Gastrocnemius medialis (tissue), 4 donors: ENCODE measurements at regions of chr9 and their contacts with region 1.

Region 1: GRCh38 chr9:111631071-111631971 is at the start of gene DNAJC25:
- DNase-seq: peak; percentile 95 to 97
- ATAC-seq: peak; percentile 98 to 99
- H3K4me3 ChIP-seq: peak within 1 kb of the TSS; percentile 78 to 90 (median 90)
- H3K27ac ChIP-seq: peak within 1 kb of the TSS; percentile 92 to 94 (median 93)
- H3K4me1 ChIP-seq: peaks cover 30 to 41% of the 10 kb centered on the region in 2 donors
- H3K27me3 ChIP-seq: no peaks in the 10 kb centered on the region
- CTCF ChIP-seq: peak in 2 of 5 experiments; percentile 22 to 23
- POLR2A ChIP-seq: peak; percentile 100
- total RNA-seq, gene DNAJC25: 3.7 to 7.4 (median 4.9) TPM

Region 2: GRCh38 chr9:110370316-110370715 is 1261.0 kb before region 1 on chr9:
- in situ Hi-C with region 1: no loop called
- intact Hi-C with region 1: no loop called
- DNase-seq: no peak
- ATAC-seq: no peak
- H3K4me3 ChIP-seq: no peak overlapping the region
- H3K27ac ChIP-seq: no peak overlapping the region
- H3K4me1 ChIP-seq: no peaks in the 10 kb centered on the region
- H3K27me3 ChIP-seq: no peaks in the 10 kb centered on the region
- CTCF ChIP-seq: no peak
- POLR2A ChIP-seq: no peak

Region 3: DNA sequence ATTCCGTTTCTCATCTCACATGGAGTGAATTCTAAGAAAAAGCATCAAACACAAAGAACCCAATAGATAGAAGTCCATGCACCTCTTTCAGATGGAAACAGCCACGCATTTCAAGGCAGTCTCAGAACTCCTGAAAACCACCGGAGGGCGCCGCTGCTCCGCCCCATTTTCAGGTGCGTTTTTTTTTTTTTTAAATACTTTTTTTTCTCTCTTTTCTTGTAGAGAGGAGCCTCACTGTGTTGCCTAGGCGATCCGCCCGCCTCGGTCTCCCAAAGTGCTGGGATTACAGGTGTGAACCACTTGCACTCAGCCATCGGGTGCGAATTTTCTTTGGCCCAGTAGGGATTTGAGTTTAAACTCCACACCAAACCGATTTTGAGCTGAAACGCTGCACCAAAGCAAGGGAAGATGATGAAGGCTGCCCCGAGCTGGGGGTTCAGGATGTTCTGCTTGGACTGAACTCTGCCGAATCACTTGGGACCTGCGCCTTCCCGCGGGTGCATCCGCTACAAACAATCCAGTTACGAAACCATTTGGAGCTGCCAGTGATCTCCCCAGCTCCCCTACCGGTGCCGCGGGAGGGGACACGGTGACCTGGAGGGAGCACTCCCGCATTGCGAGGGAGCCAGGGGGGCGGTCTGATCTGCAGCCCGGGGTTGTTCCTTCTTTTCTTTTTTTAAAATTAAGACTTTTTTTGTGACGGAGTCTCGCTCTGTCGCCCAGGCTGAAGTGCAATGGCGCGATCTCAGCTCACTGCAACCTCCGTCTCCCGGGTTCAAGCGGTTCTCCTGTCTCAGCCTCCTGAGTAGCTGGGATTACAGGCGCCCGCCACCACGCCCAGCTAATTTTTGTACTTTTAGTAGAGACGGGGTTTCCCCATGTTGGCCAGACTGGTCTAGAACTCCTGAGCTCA is 33.2 kb before region 1 on chr9:
- in situ Hi-C with region 1: no loop called
- intact Hi-C with region 1: loop called (anchors 5 kb)
- DNase-seq: peak; percentile 35 to 54
- ATAC-seq: peak; percentile 61 to 62
- H3K4me3 ChIP-seq: peak overlapping the region; percentile 66 to 89 (median 80)
- H3K27ac ChIP-seq: peak overlapping the region; percentile 69 to 81 (median 78)
- H3K4me1 ChIP-seq: peaks cover 0 to 9% of the 10 kb centered on the region in 2 donors
- H3K27me3 ChIP-seq: no peaks in the 10 kb centered on the region
- CTCF ChIP-seq: peak; percentile 10 to 63 (median 40)
- POLR2A ChIP-seq: no peak

Region 4: DNA sequence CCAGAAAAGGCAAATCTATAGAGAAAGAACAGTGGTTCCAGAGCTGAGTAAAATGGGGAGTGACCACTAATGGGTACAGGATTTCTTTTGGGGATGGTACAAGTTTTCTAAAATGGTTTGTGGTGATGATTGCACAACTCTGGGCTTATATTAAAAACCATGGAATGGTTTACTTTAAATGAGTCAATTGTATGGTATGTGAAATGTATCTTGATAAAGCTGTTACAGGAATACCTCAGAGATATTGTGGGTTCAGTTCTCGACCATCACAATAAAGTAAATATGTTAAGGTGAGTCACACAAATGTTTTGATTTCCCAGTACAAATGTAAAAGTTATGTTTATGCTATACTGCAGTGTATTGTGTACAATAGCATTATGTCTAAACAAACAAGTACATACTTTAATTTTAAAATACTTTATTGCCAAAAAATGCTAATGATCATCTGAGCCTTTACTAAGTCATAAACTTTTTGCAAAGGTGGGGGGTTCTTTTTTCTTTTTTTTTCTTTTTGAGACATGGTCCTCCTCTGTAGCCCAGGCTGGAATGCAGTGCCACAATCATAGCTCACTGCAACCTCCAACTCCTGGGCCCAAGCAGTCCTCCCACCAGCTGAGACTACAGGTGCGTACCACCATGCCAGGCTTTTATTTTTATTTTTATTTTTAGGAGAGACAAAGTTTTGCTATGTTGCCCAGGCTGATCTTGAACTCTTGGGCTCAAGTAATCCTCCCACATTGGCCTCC is 97.5 kb after region 1 on chr9:
- in situ Hi-C with region 1: loop called in 1 of 4 experiments (anchors 25 kb)
- intact Hi-C with region 1: no loop called
- DNase-seq: no peak
- ATAC-seq: no peak
- H3K4me3 ChIP-seq: no peak overlapping the region
- H3K27ac ChIP-seq: no peak overlapping the region
- H3K4me1 ChIP-seq: no peaks in the 10 kb centered on the region
- H3K27me3 ChIP-seq: no peaks in the 10 kb centered on the region
- CTCF ChIP-seq: no peak
- POLR2A ChIP-seq: no peak

Region 5: DNA sequence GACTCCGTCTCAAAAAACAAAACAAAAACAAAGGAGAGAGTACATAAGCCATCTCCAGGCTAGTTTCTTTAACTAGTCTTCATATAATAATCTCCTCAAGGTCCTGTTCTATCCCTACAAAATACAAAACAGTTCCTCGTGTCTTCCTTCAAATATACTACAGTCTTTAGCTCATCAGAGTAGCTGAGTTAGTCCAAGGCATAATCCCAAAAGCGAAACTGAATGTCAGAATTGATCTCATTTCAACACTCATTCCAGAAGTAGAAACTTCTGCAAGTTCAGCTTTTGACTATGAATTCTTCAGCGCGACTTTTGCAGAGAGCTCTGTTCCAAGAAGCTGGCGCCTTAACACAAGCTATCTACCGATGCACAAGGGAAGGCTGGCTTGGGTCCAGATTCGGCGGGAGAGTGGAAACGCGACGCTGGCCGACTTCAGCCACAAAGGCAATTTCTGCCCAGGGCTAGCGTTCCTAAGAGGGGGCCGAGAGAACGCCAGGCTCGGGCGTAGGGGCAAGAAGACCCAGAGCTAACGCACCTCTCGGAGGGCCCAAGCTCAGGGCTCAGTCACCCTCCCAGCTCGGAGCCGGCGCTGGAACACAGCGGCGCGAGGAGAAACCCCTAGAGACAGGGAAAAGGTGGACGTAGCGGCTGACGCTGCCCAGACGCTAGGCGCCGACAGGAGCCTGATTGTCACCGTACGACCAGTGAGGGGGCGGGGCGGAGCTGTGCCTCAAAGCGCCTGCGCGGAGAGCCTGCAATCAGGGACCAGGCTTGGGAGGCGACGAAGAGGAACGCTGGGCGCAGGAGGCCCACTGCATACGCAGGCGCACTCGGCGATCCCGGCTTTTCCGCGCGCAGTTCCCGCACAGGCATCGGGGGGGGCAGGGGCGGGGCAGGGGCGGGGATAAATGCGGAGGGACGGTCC is 748.1 kb after region 1 on chr9:
- in situ Hi-C with region 1: no loop called
- intact Hi-C with region 1: loop called (anchors 5 kb)
- DNase-seq: peak; percentile 99 to 100
- ATAC-seq: peak; percentile 81 to 84
- H3K4me3 ChIP-seq: peak overlapping the region; percentile 89 to 99 (median 93)
- H3K27ac ChIP-seq: peak overlapping the region; percentile 93 to 99 (median 97)
- H3K4me1 ChIP-seq: peaks cover 43 to 50% of the 10 kb centered on the region in 2 donors
- H3K27me3 ChIP-seq: no peaks in the 10 kb centered on the region
- CTCF ChIP-seq: peak in 2 of 5 experiments; percentile 13 to 21
- POLR2A ChIP-seq: peak; percentile 91 to 95

Region 6: GRCh38 chr9:113221003-113221799 is 1589.9 kb after region 1 on chr9 and contains the starts of genes FKBP15 and SLC31A1:
- in situ Hi-C with region 1: loop called in 1 of 4 experiments (anchors 25 kb)
- intact Hi-C with region 1: no loop called
- DNase-seq: peak; percentile 96 to 98
- ATAC-seq: peak; percentile 99
- H3K4me3 ChIP-seq: peak within 1 kb of the TSS; percentile 80 to 97 (median 88)
- H3K27ac ChIP-seq: peak within 1 kb of the TSS; percentile 92 to 97 (median 94)
- H3K4me1 ChIP-seq: peaks cover 32 to 36% of the 10 kb centered on the region in 2 donors
- H3K27me3 ChIP-seq: no peaks in the 10 kb centered on the region
- CTCF ChIP-seq: no peak
- POLR2A ChIP-seq: peak; percentile 75 to 81
- total RNA-seq, gene FKBP15: 13.3 to 17.5 (median 14.5) TPM
- total RNA-seq, gene SLC31A1: 2.9 to 5.6 (median 4.3) TPM